GM12878 (cell line): ENCODE measurements at regions of chr1 and their contacts with region 1.

Region 1: DNA sequence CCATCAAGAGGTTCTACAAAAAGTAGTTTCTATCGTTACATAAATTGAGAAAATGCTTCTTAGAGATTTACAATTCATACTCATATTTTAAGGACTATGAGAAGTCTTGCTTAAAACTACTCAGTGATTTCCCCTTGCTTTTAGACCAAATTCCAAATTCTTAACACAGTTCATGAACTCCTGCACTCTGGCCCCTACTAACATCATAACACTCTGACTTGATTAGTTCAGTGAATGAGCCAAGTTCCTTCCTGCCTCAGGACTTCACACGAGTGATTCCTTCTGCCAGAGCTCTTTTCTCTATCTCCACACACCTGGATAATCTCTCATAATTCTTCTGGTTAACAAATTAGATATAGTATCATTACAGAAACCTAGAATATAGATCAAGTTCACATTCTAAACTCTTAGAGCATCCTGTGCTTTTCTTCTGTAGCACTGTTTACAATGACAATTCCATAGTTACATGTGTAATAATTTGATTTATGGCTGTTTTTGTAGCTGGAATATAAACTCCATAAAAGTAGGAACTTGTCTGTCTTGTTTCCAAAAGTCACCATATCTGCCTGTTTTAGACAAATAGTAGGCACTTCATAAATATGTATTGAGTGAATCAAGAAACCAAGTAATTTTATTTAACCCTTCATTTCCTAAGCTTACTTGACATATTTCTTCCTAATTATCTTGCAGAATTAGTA is 59.9 kb downstream of the NUF2 start:
- DNase-seq: no peak
- ATAC-seq: no peak
- H3K4me3 ChIP-seq: no peak overlapping the region
- H3K27ac ChIP-seq: no peak overlapping the region
- H3K4me1 ChIP-seq: no peaks in the 10 kb centered on the region
- H3K27me3 ChIP-seq: no peaks in the 10 kb centered on the region
- CTCF ChIP-seq: no peak
- EP300 ChIP-seq: no peak
- POLR2A ChIP-seq: no peak
- RAD21 ChIP-seq: no peak

Region 2: GRCh38 chr1:163346346-163346870 is 35.2 kb before region 1 on chr1:
- CTCF ChIA-PET with region 1: no interaction called
- POLR2A ChIA-PET with region 1: no interaction called
- RAD21 ChIA-PET with region 1: no interaction called
- SMC1A ChIA-PET with region 1: no interaction called
- in situ Hi-C with region 1: no loop called
- intact Hi-C with region 1: no loop called
- DNase-seq: no peak
- ATAC-seq: no peak
- H3K4me3 ChIP-seq: no peak overlapping the region
- H3K27ac ChIP-seq: no peak overlapping the region
- H3K4me1 ChIP-seq: no peaks in the 10 kb centered on the region
- H3K27me3 ChIP-seq: no peaks in the 10 kb centered on the region
- CTCF ChIP-seq: no peak
- EP300 ChIP-seq: no peak
- POLR2A ChIP-seq: no peak
- RAD21 ChIP-seq: no peak

Region 3: GRCh38 chr1:163361123-163361934 is 20.3 kb before region 1 on chr1:
- CTCF ChIA-PET with region 1: interaction called, 10 read pairs
- POLR2A ChIA-PET with region 1: no interaction called
- RAD21 ChIA-PET with region 1: no interaction called
- SMC1A ChIA-PET with region 1: no interaction called
- in situ Hi-C with region 1: no loop called
- intact Hi-C with region 1: no loop called
- DNase-seq: no peak
- ATAC-seq: peak; percentile 78
- H3K4me3 ChIP-seq: no peak overlapping the region
- H3K27ac ChIP-seq: no peak overlapping the region
- H3K4me1 ChIP-seq: no peaks in the 10 kb centered on the region
- H3K27me3 ChIP-seq: no peaks in the 10 kb centered on the region
- CTCF ChIP-seq: peak; percentile 39 to 59 (median 53); a peak in 5 of 6 replicates
- EP300 ChIP-seq: no peak
- POLR2A ChIP-seq: no peak
- RAD21 ChIP-seq: peak; percentile 63

Region 4: DNA sequence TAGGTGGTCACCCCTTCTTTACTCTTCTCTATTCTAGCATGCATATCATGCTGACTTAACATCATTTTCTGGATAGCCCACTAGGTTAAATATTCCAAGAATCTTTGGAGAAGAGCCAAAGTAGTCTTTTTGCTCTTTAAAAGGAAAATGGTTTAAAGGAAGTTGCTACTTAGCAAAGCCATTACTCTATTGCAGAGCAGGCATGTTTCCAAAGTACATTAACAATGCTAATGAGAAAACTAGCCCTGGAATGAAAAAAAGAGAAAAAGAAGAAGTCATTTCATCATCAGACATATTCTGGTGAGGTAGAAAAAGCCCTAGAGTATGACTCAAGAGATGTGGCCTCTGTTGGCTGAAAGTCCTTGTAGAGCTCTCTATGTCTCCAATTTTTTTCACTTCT is 14.2 kb after region 1 on chr1:
- CTCF ChIA-PET with region 1: no interaction called
- POLR2A ChIA-PET with region 1: no interaction called
- RAD21 ChIA-PET with region 1: no interaction called
- SMC1A ChIA-PET with region 1: no interaction called
- in situ Hi-C with region 1: no loop called
- intact Hi-C with region 1: no loop called
- DNase-seq: no peak
- ATAC-seq: no peak
- H3K4me3 ChIP-seq: no peak overlapping the region
- H3K27ac ChIP-seq: no peak overlapping the region
- H3K4me1 ChIP-seq: no peaks in the 10 kb centered on the region
- H3K27me3 ChIP-seq: no peaks in the 10 kb centered on the region; a peak in 1 of 4 replicates
- CTCF ChIP-seq: no peak
- EP300 ChIP-seq: no peak
- POLR2A ChIP-seq: no peak
- RAD21 ChIP-seq: no peak